ENCODE measurements at regions of chr3 and their contacts with region 1.

Region 1: DNA sequence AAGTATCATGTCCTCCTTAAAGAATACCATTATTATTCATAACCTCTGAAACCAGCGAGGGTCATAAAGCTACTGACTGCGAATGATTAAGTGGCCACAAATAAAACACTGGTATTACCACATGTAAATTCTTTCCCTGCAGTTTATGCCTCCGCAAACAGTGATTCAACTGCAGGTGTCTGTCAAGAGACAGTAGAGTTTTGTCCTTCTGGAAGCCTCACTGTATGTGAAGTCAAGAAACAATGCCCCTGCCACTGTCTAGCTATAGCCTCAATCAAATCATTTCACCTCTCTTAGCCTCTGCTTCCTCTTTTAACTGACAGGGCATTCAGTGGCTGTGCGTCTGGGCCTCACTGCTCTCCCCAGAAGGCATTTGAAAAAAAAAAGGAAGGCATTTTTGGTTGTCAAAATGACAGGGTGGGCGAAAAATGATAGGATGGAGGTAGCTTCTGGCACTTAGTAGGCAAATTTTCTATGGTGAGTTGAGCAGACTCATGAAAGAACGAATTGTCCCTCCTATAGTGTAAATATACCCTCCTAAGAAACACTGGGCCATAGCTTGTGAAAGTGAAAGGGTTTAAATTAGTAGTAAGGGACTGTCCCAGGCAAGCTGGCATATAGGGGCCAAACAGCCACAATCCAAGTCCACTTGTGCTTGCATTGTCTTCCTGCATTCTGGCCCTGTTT is 66.7 kb downstream of the FILIP1L start:
- DNase-seq: no peak
- ATAC-seq: peak; percentile 72
- H3K4me3 Mint-ChIP-seq: peak overlapping the region; percentile 81
- H3K27ac Mint-ChIP-seq: peak overlapping the region; percentile 97
- H3K4me1 Mint-ChIP-seq: peaks cover 67% of the 10 kb centered on the region
- H3K27me3 Mint-ChIP-seq: no peaks in the 10 kb centered on the region
- CTCF ChIP-seq: no peak

Region 2: DNA sequence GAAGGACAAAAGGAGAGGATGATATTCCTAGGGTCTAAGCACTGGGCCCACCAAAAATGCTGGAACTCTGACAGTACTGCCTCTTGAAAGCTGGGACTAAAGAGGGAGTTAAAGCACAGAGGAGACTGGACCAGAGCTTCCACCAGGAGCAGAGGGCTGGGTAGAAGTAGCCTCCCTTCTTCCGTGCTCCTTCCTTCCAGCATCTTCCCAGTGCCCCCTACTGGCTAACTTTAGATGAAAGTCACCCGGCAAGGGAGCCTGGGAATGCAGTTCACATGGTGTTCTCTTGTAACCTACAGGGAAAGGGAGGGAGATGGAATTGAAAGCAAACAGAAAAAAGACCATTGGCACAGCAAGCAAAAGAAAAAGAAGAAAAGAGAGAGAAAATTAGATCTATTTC is 515.4 kb before region 1 on chr3:
- CTCF ChIA-PET with region 1: no interaction called
- POLR2A ChIA-PET with region 1: no interaction called
- intact Hi-C with region 1: no loop called
- DNase-seq: no peak
- ATAC-seq: no peak
- H3K4me3 Mint-ChIP-seq: no peak overlapping the region
- H3K27ac Mint-ChIP-seq: no peak overlapping the region
- H3K4me1 Mint-ChIP-seq: no peaks in the 10 kb centered on the region
- H3K27me3 Mint-ChIP-seq: peaks cover 2% of the 10 kb centered on the region
- CTCF ChIP-seq: no peak

Region 3: GRCh38 chr3:99875929-99876841 is 171.4 kb before region 1 on chr3:
- CTCF ChIA-PET with region 1: no interaction called
- POLR2A ChIA-PET with region 1: interaction called, 4 read pairs
- intact Hi-C with region 1: loop called (anchors 1 kb)
- DNase-seq: peak; percentile 69
- ATAC-seq: peak; percentile 98
- H3K4me3 Mint-ChIP-seq: peak overlapping the region; percentile 81
- H3K27ac Mint-ChIP-seq: peak overlapping the region; percentile 39
- H3K4me1 Mint-ChIP-seq: peaks cover 26% of the 10 kb centered on the region
- H3K27me3 Mint-ChIP-seq: no peaks in the 10 kb centered on the region
- CTCF ChIP-seq: no peak

Region 4: DNA sequence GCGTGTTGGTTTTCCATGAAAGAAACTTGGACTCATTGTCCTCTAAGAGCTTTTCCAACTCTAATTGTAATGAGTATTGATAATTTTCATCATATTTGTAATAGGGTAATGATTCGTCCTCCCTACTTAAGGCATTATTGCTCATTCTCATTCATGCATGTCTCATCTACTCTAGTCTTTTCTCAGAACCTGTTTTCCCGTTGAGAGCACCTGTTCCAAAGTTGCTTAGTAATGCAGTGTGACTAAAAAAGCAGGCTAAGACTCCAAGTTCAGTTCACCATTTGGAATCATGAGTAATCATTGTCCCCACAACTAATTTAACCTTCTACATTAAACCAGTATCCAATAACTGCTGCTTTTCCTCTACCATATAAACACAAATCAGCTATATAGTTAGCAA is 17.3 kb before region 1 on chr3:
- CTCF ChIA-PET with region 1: no interaction called
- POLR2A ChIA-PET with region 1: interaction called, 3 read pairs
- intact Hi-C with region 1: loop called (anchors 2 kb)
- DNase-seq: no peak
- ATAC-seq: peak; percentile 18
- H3K4me3 Mint-ChIP-seq: no peak overlapping the region
- H3K27ac Mint-ChIP-seq: no peak overlapping the region
- H3K4me1 Mint-ChIP-seq: peaks cover 16% of the 10 kb centered on the region
- H3K27me3 Mint-ChIP-seq: no peaks in the 10 kb centered on the region
- CTCF ChIP-seq: no peak

Region 5: GRCh38 chr3:100260685-100261484 is 213.3 kb after region 1 on chr3 and contains the start of gene TBC1D23:
- CTCF ChIA-PET with region 1: no interaction called
- POLR2A ChIA-PET with region 1: interaction called, 8 read pairs
- intact Hi-C with region 1: loop called (anchors 1 kb)
- DNase-seq: peak; percentile 93
- ATAC-seq: peak; percentile 100
- H3K4me3 Mint-ChIP-seq: peak within 1 kb of the TSS; percentile 93
- H3K27ac Mint-ChIP-seq: peak within 1 kb of the TSS; percentile 96
- H3K4me1 Mint-ChIP-seq: peaks cover 43% of the 10 kb centered on the region
- H3K27me3 Mint-ChIP-seq: no peaks in the 10 kb centered on the region
- CTCF ChIP-seq: no peak
- total RNA-seq, gene TBC1D23: 27.2 and 27.7 TPM in 2 replicates

Region 6: DNA sequence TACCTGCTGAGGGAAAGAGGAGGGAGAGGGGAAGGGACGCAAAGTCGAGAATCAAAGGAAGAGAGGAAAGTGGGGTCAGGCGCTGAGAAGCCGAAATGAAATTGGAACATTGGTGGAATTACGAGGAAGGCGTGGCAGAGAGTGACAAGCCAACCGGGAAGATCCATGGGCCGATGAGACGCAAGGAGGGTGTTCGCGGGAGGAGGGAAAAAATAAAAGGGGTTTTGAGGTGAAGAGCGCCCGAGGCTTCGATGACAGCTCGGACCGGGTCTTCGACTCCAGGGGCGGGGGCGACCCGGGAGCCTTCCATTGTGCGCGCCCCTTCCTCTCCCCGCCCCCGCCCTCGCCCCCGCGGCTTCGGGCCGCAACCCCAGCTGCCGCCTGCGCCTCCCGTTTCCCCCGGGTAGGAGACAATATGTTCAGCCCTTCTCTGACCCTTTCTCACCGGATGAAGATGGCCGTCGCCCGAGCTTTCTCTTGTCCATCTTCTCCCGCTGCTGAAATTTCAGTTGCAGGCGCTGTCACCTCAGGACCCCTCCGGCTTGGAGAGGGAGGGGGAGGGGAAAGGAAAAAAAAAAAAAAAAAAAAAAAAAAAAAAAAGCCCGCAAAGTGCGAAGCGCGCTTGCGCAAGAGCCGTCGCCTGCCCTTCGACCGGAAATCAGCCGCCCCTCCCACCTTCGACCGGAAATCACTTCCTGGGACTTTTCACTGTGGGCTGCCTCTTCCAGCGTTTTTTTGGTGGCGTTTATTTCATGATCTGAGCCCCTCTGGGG is 1465.2 kb after region 1 on chr3 and contains the start of gene SENP7:
- CTCF ChIA-PET with region 1: no interaction called
- POLR2A ChIA-PET with region 1: no interaction called
- intact Hi-C with region 1: loop called (anchors 10 kb)
- DNase-seq: peak; percentile 74
- ATAC-seq: peak; percentile 72
- H3K4me3 Mint-ChIP-seq: peak within 1 kb of the TSS; percentile 98
- H3K27ac Mint-ChIP-seq: peak within 1 kb of the TSS; percentile 99
- H3K4me1 Mint-ChIP-seq: peaks cover 35% of the 10 kb centered on the region
- H3K27me3 Mint-ChIP-seq: no peaks in the 10 kb centered on the region
- CTCF ChIP-seq: no peak
- total RNA-seq, gene SENP7: 18.6 and 22.1 TPM in 2 replicates

Measured in activated B cell treated with CpG ODN at 0.5 μM for 24 hours (primary cell).